ENCODE measurements at regions of chr5 and their contacts with region 1.

Region 1: DNA sequence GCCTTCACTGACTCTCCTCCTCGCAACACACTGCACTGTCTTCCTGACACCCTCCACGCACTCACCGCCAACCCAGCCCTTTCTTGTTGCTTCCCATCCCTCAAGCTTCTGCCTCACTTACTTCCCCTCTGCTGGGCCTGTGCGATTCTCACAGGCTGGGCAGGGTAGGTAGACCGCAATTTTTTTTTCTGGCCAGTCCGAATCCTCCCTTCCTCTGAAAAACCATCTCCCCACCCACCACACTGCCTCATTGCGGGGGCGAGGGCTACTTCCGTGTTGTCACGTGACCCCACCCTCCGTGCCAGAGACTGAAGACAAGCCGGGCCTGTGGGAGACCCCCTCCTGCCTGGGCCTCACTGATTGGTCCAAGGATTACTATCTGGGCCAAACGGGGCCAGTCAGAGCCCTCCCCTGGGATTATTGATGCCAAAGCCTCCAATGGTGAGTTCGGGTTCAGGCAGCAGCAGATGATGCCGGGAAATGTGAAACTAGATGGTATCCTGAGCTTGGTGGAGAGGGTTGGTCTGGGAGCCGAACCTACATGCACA is 73.1 kb downstream of the STK10 start:
- DNase-seq: peak; percentile 92
- H3K4me3 Mint-ChIP-seq: peak overlapping the region; percentile 79
- H3K27ac Mint-ChIP-seq: peak overlapping the region; percentile 97
- H3K4me1 Mint-ChIP-seq: peaks cover 86% of the 10 kb centered on the region
- H3K27me3 Mint-ChIP-seq: no peaks in the 10 kb centered on the region

Region 2: DNA sequence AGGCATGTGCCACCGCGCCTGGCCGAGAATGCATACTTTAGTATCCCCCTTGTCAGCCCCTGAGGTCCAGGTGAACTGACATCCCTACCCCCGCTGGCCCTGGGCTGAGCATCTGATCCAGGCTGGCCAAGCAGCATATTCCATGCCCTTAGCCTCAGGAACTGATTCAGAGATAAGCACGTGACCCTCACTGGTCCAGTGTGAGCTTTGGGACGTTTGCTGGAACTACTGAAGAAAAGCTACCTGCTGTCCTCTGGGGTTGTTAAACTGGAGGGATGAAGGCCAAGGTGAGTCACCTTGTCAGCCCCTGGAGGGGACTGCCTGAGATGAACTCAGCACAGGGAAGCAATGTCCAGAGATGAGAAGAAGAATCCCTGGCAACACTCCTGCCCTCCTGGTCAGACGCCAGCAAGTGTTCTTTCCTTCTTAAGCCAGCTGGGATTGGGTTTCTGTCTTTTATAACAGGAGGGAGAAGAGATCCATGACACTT is 49.4 kb before region 1 on chr5:
- CTCF ChIA-PET with region 1: no interaction called
- POLR2A ChIA-PET with region 1: interaction called, 12 read pairs
- DNase-seq: no peak
- H3K4me3 Mint-ChIP-seq: no peak overlapping the region
- H3K27ac Mint-ChIP-seq: peak overlapping the region; percentile 82
- H3K4me1 Mint-ChIP-seq: peaks cover 54% of the 10 kb centered on the region
- H3K27me3 Mint-ChIP-seq: no peaks in the 10 kb centered on the region

Region 3: GRCh38 chr5:172293054-172293744 is 178.2 kb after region 1 on chr5:
- CTCF ChIA-PET with region 1: interaction called, 10 read pairs
- POLR2A ChIA-PET with region 1: no interaction called
- DNase-seq: peak; percentile 70
- H3K4me3 Mint-ChIP-seq: no peak overlapping the region
- H3K27ac Mint-ChIP-seq: no peak overlapping the region
- H3K4me1 Mint-ChIP-seq: peaks cover 2% of the 10 kb centered on the region
- H3K27me3 Mint-ChIP-seq: peaks cover 11% of the 10 kb centered on the region

Measured in activated CD4-positive, alpha-beta memory T cell treated with anti-CD3 and anti-CD28 coated beads, Interleukin-2, amount 10 ng/mL, durations not matched to agents 7 days and 5 days (primary cell).